ENCODE measurements at regions of chr6 and their contacts with region 1.

Region 1: DNA sequence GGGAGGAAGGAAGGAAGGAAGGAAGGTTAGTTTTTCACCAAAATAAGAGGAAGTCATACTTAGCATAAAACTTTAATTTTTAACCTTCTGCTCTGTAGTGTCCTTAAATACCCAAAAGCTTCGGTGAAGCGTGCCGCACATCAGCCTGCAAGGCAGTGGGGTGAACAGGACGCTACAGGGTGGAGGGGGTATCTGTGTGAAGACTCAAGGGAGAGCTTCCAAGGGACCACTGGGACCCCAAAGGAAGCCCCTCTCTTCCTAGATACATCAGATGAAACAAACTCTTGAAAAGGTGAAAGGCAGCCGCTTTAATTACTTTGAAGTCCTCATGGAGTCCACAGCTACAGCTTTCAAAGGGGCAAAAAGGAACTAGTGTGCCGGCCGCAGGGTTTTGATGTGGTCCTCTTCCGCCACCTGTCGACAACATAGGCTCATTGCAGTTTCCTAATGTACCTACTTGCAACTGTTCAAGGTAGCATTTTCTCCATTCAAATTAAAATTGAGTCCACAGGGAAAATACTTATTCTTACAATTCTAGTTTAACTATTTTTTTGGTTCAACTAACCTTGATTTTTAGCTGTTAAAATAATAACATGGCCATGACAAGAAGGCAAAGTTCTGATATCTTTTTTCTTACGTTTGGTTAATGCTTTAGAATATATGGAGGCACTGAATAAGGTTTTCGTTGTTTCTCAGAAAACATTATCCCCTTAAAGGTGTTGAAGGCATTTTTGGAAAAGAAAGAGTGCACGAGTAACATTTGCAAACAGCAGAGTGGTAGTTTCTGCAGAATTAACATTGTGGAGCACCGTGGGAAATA is 135.0 kb upstream of the RIPOR2 start:
- DNase-seq: peak; percentile 63
- ATAC-seq: peak; percentile 94
- H3K4me3 Mint-ChIP-seq: peak overlapping the region; percentile 84
- H3K27ac Mint-ChIP-seq: peak overlapping the region; percentile 97
- H3K4me1 Mint-ChIP-seq: peaks cover 6% of the 10 kb centered on the region
- H3K27me3 Mint-ChIP-seq: no peaks in the 10 kb centered on the region
- CTCF ChIP-seq: peak; percentile 57

Region 2: DNA sequence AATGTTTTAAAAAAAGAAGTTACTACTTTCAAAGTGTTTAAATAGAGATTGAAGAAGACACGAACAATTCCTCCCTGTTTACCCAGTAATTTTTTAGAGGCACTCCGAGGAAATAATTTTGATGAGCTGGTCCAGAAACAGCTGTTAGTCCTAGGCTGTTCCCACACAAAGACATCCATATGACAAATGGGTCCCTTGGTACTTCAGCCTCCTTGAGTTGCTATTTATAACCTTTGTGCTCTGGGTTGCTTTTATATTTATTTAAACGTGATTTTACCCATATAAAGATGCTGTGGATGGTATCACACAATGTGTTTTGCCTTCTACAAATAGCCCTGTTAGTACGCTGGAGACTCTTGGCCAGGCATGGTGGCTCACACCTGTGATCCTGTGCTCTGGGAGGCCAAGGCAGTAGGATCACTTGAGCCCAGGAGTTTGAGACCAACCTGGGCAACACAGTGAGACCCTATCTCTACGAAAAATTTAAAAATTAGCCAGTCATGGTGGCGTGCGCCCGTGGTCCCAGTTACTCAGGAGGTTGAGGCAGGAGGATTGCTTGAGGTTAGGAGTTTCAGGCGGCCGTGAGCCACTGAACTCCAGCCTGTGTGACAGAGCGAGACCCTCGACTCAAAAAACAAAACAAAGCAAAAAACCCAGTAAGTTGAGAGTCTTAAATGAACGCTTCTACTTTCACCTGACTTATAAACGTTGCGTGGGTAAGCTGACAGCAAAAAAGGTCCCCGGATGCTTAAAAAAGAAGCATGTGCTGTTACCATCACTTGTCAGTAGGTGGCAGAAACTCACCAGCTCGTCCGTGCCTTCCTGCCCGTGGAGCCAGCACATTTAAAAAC is 215.1 kb before region 1 on chr6:
- CTCF ChIA-PET with region 1: interaction called, 65 read pairs
- POLR2A ChIA-PET with region 1: interaction called, 7 read pairs
- intact Hi-C with region 1: loop called (anchors 1 kb)
- DNase-seq: no peak
- ATAC-seq: peak; percentile 66
- H3K4me3 Mint-ChIP-seq: no peak overlapping the region
- H3K27ac Mint-ChIP-seq: peak overlapping the region; percentile 81
- H3K4me1 Mint-ChIP-seq: peaks cover 63% of the 10 kb centered on the region
- H3K27me3 Mint-ChIP-seq: no peaks in the 10 kb centered on the region
- CTCF ChIP-seq: peak; percentile 58

Region 3: DNA sequence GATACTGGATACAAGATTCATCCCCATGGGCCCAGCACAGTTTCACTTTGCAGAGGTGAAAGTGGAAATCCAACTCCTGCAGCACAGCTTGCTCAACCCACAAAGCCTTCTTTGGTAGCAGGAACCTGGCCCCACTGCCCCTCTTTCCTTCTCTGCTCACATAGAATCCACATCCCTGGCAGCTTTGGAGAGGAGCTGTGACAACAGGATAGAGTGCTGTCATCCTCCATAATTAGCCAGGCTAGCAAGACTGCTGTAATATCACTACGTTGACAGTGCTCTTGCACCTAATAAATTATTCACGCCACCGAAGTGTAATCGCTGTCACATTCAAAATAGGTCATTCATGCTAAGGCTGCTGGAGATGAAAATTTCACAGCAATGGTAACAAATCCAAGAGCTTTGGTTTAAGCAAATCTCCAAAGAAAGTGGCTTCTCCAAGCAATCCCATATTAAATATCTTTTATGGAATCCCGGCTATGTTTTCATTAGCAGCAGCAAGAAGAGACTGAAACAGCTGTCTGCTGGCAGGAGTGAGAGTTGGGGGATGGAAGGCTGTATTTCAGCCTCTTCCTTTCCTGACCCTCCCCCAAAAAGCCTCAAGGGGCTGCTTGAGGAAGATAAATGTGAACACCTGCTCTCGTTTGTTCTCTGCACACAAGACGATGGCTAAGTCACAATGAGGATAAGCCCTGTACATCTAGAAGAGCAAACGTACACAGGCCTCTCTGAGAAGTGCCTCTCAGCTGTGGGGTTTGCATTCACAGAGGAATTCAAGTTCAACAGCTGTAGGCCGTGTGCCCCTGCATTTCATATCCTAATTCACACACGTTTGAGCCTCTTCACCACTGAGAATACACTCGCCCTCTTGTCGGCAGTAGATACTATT is 151.5 kb before region 1 on chr6:
- CTCF ChIA-PET with region 1: interaction called, 10 read pairs
- POLR2A ChIA-PET with region 1: no interaction called
- intact Hi-C with region 1: no loop called
- DNase-seq: no peak
- ATAC-seq: peak; percentile 55
- H3K4me3 Mint-ChIP-seq: peak overlapping the region; percentile 61
- H3K27ac Mint-ChIP-seq: peak overlapping the region; percentile 88
- H3K4me1 Mint-ChIP-seq: peaks cover 96% of the 10 kb centered on the region
- H3K27me3 Mint-ChIP-seq: no peaks in the 10 kb centered on the region
- CTCF ChIP-seq: no peak

Region 4: GRCh38 chr6:25027221-25027916 is 43.4 kb before region 1 on chr6:
- CTCF ChIA-PET with region 1: interaction called, 140 read pairs
- POLR2A ChIA-PET with region 1: interaction called, 27 read pairs
- intact Hi-C with region 1: loop called (anchors 1 kb)
- DNase-seq: peak; percentile 59
- ATAC-seq: peak; percentile 90
- H3K4me3 Mint-ChIP-seq: peak overlapping the region; percentile 77
- H3K27ac Mint-ChIP-seq: peak overlapping the region; percentile 83
- H3K4me1 Mint-ChIP-seq: peaks cover 58% of the 10 kb centered on the region
- H3K27me3 Mint-ChIP-seq: no peaks in the 10 kb centered on the region
- CTCF ChIP-seq: no peak

Region 5: DNA sequence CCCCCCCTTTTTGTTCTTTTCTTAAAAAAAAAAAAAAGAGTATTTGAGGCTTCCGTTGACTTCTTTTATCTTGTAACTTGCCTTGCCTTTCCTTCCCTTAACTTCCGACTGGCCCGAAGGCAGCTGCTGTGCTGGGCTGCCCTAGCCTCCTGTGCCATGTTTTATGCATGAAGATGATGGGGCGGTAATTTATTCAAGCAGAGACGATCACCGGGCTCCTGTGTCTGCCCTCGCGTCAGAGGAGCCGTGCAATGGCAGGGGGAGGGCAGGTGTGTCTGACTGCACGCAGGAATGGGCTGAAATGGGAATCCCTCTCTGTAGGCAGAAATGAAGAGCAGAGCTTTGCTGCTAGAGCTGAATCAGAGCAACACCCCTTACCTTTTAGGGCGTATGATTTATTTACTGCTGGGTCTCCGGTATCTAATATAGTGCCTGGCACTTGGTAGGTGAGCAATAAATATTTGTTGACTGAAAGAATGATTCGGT is 28.7 kb before region 1 on chr6:
- CTCF ChIA-PET with region 1: interaction called, 36 read pairs
- POLR2A ChIA-PET with region 1: interaction called, 25 read pairs
- intact Hi-C with region 1: loop called (anchors 1 kb)
- DNase-seq: peak; percentile 53
- ATAC-seq: peak; percentile 65
- H3K4me3 Mint-ChIP-seq: peak overlapping the region; percentile 99
- H3K27ac Mint-ChIP-seq: peak overlapping the region; percentile 96
- H3K4me1 Mint-ChIP-seq: peaks cover 87% of the 10 kb centered on the region
- H3K27me3 Mint-ChIP-seq: no peaks in the 10 kb centered on the region
- CTCF ChIP-seq: no peak

Measured in activated B cell treated with CpG ODN at 0.5 μM for 24 hours (primary cell).